B cell (primary cell): ENCODE measurements at regions of chr14 and their contacts with region 1.

Region 1: GRCh38 chr14:20613094-20614037 is 22.2 kb upstream of the RNASE12 start:
- DNase-seq: peak; percentile 97
- ATAC-seq: peak; percentile 73
- H3K4me3 ChIP-seq: peak overlapping the region; percentile 49 to 80 (median 70)
- H3K4me3 Mint-ChIP-seq: no peak overlapping the region
- H3K27ac ChIP-seq: peak overlapping the region; percentile 67 to 76
- H3K27ac Mint-ChIP-seq: no peak overlapping the region
- H3K4me1 ChIP-seq: peaks cover 42 to 51% of the 10 kb centered on the region in 2 donors
- H3K4me1 Mint-ChIP-seq: peaks cover 9% of the 10 kb centered on the region
- H3K27me3 ChIP-seq: peaks cover 0 to 6% (median 0%) of the 10 kb centered on the region in 4 experiments
- H3K27me3 Mint-ChIP-seq: peaks cover 5% of the 10 kb centered on the region
- CTCF ChIP-seq: peak; percentile 51

Region 2: DNA sequence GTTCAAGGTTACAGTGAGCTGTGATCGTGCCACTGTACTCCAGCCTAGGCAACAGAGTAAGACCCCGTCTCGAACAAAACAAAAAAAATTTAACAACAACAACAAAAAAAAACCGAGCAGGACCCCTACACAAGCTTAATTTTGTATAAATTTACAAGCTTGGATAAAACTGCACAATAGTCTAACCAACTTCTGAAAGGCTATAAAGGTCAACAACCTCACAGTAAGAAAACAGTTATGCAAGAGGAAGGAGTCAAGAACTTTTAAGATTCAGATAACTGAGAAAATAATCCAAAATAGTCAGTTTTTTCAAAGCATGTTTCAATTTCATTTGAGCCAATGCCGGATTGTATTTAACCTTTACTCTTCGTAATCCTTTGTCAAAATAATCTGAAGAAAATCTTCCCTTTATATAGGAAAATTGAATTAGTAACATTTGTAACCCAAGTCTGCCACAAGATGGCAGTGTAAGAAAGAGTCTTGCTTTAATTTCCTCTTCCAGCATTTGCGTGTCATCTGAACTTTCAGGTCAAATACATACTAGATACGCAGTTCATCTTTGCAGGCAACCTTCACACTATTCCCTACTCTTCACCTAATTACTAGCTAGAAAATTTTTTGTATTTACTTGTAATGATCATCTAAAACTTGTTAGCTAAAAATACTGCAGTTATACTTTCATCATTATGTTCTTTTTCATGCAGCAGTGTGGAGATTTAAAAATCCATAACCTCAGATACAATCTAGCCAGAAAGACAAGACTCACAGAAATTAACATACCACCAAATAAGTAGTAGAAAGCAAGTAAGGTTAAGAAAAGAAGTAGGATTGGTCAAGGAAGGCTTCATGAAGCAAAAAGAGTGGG is 286.1 kb before region 1 on chr14:
- CTCF ChIA-PET with region 1: interaction called, 215 read pairs
- POLR2A ChIA-PET with region 1: interaction called, 4 read pairs
- intact Hi-C with region 1: loop called (anchors 1 kb)
- DNase-seq: peak; percentile 81
- ATAC-seq: peak; percentile 67
- H3K4me3 ChIP-seq: no peak overlapping the region
- H3K4me3 Mint-ChIP-seq: peak overlapping the region; percentile 1
- H3K27ac ChIP-seq: no peak overlapping the region
- H3K27ac Mint-ChIP-seq: peak overlapping the region; percentile 33
- H3K4me1 ChIP-seq: peaks cover under 1 to 6% of the 10 kb centered on the region in 2 donors
- H3K4me1 Mint-ChIP-seq: peaks cover 30% of the 10 kb centered on the region
- H3K27me3 ChIP-seq: no peaks in the 10 kb centered on the region
- H3K27me3 Mint-ChIP-seq: no peaks in the 10 kb centered on the region
- CTCF ChIP-seq: peak; percentile 91

Region 3: GRCh38 chr14:20413045-20413799 is 200.1 kb before region 1 on chr14 and contains the start of gene TEP1:
- CTCF ChIA-PET with region 1: interaction called, 83 read pairs
- POLR2A ChIA-PET with region 1: interaction called, 4 read pairs
- intact Hi-C with region 1: loop called (anchors 1 kb)
- DNase-seq: peak; percentile 78
- ATAC-seq: peak; percentile 79
- H3K4me3 ChIP-seq: peak within 1 kb of the TSS; percentile 77 to 97 (median 93)
- H3K4me3 Mint-ChIP-seq: peak within 1 kb of the TSS; percentile 100
- H3K27ac ChIP-seq: peak within 1 kb of the TSS; percentile 90 to 92
- H3K27ac Mint-ChIP-seq: peak within 1 kb of the TSS; percentile 100
- H3K4me1 ChIP-seq: peaks cover 31 to 35% of the 10 kb centered on the region in 2 donors
- H3K4me1 Mint-ChIP-seq: peaks cover 48% of the 10 kb centered on the region
- H3K27me3 ChIP-seq: no peaks in the 10 kb centered on the region
- H3K27me3 Mint-ChIP-seq: no peaks in the 10 kb centered on the region
- CTCF ChIP-seq: no peak
- total RNA-seq, gene TEP1: 123 and 143 TPM in 2 replicates

Region 4: DNA sequence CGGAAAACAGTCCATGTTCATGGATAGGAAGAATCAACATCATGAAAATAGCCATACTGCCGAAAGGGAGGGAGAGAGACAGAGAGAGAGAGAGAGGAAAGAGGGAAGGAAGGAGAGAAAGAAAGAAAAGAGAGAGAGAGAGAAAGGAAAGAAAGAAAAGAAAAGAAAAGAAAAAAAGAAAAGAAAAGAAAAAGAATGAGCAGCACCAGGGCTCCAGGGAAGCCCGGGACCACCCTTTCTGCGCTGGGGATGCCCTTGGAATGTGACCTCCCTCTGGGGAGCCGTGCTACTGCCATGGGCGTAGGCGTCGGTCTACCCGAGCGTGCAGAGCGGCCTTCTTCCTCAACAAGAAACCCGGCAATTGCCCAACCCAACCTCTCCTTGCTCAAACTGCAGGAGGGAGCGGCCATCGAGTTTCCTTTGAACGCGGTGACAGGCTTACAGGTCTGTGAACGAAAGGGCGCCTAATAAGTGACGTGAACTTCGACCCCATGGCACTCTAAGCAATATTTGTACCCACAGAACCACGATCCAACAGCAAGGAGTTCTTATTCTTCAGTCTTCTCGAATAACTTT is 11.2 kb after region 1 on chr14:
- CTCF ChIA-PET with region 1: interaction called, 19 read pairs
- POLR2A ChIA-PET with region 1: no interaction called
- intact Hi-C with region 1: loop called (anchors 1 kb)
- DNase-seq: peak; percentile 76
- ATAC-seq: peak; percentile 61
- H3K4me3 ChIP-seq: peak overlapping the region in 4 of 5 experiments; percentile 24 to 53 (median 43)
- H3K4me3 Mint-ChIP-seq: peak overlapping the region; percentile 88
- H3K27ac ChIP-seq: peak overlapping the region in 1 of 2 donors; percentile 5
- H3K27ac Mint-ChIP-seq: peak overlapping the region; percentile 91
- H3K4me1 ChIP-seq: peaks cover 46 to 52% of the 10 kb centered on the region in 2 donors
- H3K4me1 Mint-ChIP-seq: peaks cover 66% of the 10 kb centered on the region
- H3K27me3 ChIP-seq: peaks cover 0 to 23% (median under 1%) of the 10 kb centered on the region in 4 experiments
- H3K27me3 Mint-ChIP-seq: peaks cover 34% of the 10 kb centered on the region
- CTCF ChIP-seq: no peak

Region 5: GRCh38 chr14:20682435-20683124 is 69.2 kb after region 1 on chr14:
- CTCF ChIA-PET with region 1: interaction called, 44 read pairs
- POLR2A ChIA-PET with region 1: interaction called, 30 read pairs
- intact Hi-C with region 1: loop called (anchors 1 kb)
- DNase-seq: peak; percentile 88
- ATAC-seq: peak; percentile 57
- H3K4me3 ChIP-seq: peak overlapping the region; percentile 81 to 95 (median 92)
- H3K4me3 Mint-ChIP-seq: no peak overlapping the region
- H3K27ac ChIP-seq: peak overlapping the region; percentile 92 to 94
- H3K27ac Mint-ChIP-seq: no peak overlapping the region
- H3K4me1 ChIP-seq: peaks cover 31 to 48% of the 10 kb centered on the region in 2 donors
- H3K4me1 Mint-ChIP-seq: peaks cover 15% of the 10 kb centered on the region
- H3K27me3 ChIP-seq: no peaks in the 10 kb centered on the region
- H3K27me3 Mint-ChIP-seq: no peaks in the 10 kb centered on the region
- CTCF ChIP-seq: no peak

Region 6: DNA sequence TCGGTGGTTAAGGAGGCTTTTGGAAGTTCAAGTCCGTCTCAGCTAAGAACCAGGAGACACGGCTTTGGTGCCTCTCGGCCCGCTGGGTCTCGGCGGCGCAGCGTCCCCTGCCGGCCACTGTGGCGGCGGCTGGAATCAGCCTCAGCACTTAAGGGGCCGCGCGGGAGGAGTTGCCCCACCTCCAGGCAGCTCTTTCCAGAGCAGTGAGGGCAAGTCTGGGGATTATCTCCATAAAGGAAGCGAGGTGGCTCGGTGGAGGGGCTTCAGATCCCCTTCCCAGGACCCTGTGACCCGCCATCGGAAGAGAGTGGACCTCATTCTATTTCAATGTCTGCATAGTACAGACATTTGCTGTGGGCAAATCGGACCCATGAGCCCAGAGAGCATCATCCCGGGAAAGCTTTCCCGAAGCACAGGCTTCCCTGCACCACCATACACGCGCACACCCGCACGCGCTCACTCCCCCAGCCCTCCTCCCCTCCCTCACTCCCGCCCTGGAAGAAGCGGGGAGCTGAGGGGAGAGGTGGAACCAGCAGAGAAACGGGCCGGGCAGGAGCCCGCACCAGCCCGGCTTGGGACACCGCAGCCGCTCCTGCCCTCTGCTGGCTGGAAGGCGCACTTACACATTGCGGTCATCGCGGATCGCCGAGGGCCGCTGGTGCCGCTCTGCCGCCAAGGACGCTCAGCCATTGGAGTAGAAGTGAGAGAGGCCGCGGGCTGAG is 357.8 kb after region 1 on chr14:
- CTCF ChIA-PET with region 1: interaction called, 4 read pairs
- POLR2A ChIA-PET with region 1: no interaction called
- intact Hi-C with region 1: loop called (anchors 5 kb)
- DNase-seq: peak; percentile 89
- ATAC-seq: peak; percentile 96
- H3K4me3 ChIP-seq: peak overlapping the region; percentile 62 to 76 (median 68)
- H3K4me3 Mint-ChIP-seq: peak overlapping the region; percentile 96
- H3K27ac ChIP-seq: no peak overlapping the region
- H3K27ac Mint-ChIP-seq: peak overlapping the region; percentile 73
- H3K4me1 ChIP-seq: peaks cover 8 to 14% of the 10 kb centered on the region in 2 donors
- H3K4me1 Mint-ChIP-seq: peaks cover 11% of the 10 kb centered on the region
- H3K27me3 ChIP-seq: peaks cover 0 to 43% (median 10%) of the 10 kb centered on the region in 4 experiments
- H3K27me3 Mint-ChIP-seq: peaks cover 63% of the 10 kb centered on the region
- CTCF ChIP-seq: peak; percentile 94